PC-3 (cell line): ENCODE measurements at regions of chr5 and their contacts with region 1.

Region 1: DNA sequence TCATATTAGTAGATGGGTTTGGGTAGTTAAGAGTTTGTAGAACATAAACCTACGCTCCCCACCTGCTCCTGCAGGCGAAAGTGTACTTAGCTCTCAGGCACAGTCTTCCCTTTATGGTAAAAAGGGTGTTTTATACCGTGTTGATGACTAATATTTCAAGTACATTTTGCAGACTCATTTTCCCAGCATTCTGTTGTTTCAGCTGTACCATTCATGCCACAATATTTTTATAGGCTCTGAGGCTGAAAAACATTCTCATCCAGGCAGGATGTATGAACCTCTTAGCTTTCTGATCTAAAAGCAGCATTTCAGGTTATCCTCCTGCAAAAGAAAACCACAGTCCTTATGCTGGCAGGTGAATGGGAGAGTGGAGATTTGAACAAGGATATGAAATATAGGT is 231.4 kb downstream of the NR2F1-AS1 start:
- DNase-seq: peak; percentile 95
- ATAC-seq: peak; percentile 97
- H3K4me3 ChIP-seq: no peak overlapping the region
- H3K27ac ChIP-seq: peak overlapping the region; percentile 78
- H3K4me1 ChIP-seq: peaks cover 19% of the 10 kb centered on the region
- H3K27me3 ChIP-seq: no peaks in the 10 kb centered on the region
- CTCF ChIP-seq: no peak

Region 2: GRCh38 chr5:93304456-93305250 is 45.0 kb before region 1 on chr5:
- CTCF ChIA-PET with region 1: no interaction called
- POLR2A ChIA-PET with region 1: interaction called, 11 read pairs
- intact Hi-C with region 1: no loop called
- DNase-seq: no peak
- ATAC-seq: no peak
- H3K4me3 ChIP-seq: no peak overlapping the region
- H3K27ac ChIP-seq: no peak overlapping the region
- H3K4me1 ChIP-seq: peaks cover 41% of the 10 kb centered on the region
- H3K27me3 ChIP-seq: no peaks in the 10 kb centered on the region
- CTCF ChIP-seq: no peak

Region 3: GRCh38 chr5:93503598-93504067 is 154.0 kb after region 1 on chr5:
- CTCF ChIA-PET with region 1: no interaction called
- POLR2A ChIA-PET with region 1: no interaction called
- intact Hi-C with region 1: no loop called
- DNase-seq: peak; percentile 79
- ATAC-seq: peak; percentile 88
- H3K4me3 ChIP-seq: no peak overlapping the region
- H3K27ac ChIP-seq: peak overlapping the region; percentile 31
- H3K4me1 ChIP-seq: peaks cover 12% of the 10 kb centered on the region
- H3K27me3 ChIP-seq: no peaks in the 10 kb centered on the region
- CTCF ChIP-seq: no peak